ENCODE measurements at regions of chr1 and their contacts with region 1.

Region 1: GRCh38 chr1:244451951-244452795 is 464 bp upstream of the ADSS2 start:
- DNase-seq: peak; percentile 100
- H3K4me3 ChIP-seq: peak overlapping the region; percentile 98
- H3K27ac ChIP-seq: peak overlapping the region; percentile 91
- H3K4me1 ChIP-seq: peaks cover 32% of the 10 kb centered on the region
- H3K27me3 ChIP-seq: no peaks in the 10 kb centered on the region
- CTCF ChIP-seq: peak; percentile 57

Region 2: DNA sequence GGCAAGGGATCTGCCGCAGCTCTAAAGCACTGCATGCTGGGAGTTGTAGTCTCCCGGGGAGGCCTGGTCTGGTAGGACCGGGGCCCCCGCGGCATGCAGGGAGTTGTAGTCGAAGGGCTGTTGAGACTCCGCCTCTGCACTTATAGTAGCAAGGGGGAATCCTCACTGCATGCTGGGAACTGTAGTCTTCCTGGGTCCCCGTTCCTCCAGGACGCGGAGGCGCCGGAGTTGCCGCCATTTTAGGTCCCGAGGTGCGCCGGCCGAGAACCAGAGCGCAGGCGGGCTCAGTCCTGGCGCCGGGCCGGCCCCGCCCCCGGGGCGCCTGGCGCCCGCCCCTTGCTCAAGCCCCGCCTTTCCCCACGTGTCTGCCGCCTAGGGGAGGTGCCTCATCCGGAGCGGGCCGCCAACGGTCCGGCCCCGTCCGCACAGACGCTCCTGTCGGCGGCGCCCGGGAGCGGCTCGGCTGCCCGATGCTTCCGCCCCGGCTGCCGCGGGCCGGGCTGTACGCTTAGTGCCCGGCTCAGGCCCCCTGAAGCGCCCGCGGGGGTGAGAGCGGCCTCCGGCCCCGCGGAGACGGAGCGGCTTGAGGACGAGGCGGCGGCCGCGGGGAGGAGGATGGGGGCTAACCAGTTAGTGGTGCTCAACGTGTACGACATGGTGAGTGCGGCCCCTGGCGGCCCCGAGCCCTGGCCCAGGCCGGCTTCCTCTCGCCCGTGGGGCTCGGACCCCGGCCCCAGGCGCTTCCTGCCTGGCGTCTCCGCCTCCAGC is 200.7 kb after region 1 on chr1 and contains the start of gene DESI2:
- CTCF ChIA-PET with region 1: no interaction called
- POLR2A ChIA-PET with region 1: no interaction called
- intact Hi-C with region 1: loop called (anchors 1 kb)
- DNase-seq: peak; percentile 99
- H3K4me3 ChIP-seq: peak within 1 kb of the TSS; percentile 91
- H3K27ac ChIP-seq: peak within 1 kb of the TSS; percentile 94
- H3K4me1 ChIP-seq: peaks cover 17% of the 10 kb centered on the region
- H3K27me3 ChIP-seq: no peaks in the 10 kb centered on the region
- CTCF ChIP-seq: peak; percentile 54
- total RNA-seq, gene DESI2: 40.7 and 47.7 TPM in 2 replicates

Region 3: GRCh38 chr1:245197911-245198379 is 745.8 kb after region 1 on chr1:
- CTCF ChIA-PET with region 1: no interaction called
- POLR2A ChIA-PET with region 1: no interaction called
- intact Hi-C with region 1: no loop called
- DNase-seq: peak; percentile 3
- H3K4me3 ChIP-seq: no peak overlapping the region
- H3K27ac ChIP-seq: no peak overlapping the region
- H3K4me1 ChIP-seq: no peaks in the 10 kb centered on the region
- H3K27me3 ChIP-seq: peaks cover 10% of the 10 kb centered on the region
- CTCF ChIP-seq: no peak